ENCODE measurements at regions of chr9 and their contacts with region 1.

Region 1: GRCh38 chr9:38687387-38687842 is 32.5 kb downstream of the FAM240B start:
- DNase-seq: peak in 5 of 10 donors; percentile 18 to 89 (median 71)

Region 2: GRCh38 chr9:38629511-38629910 is 57.9 kb before region 1 on chr9:
- intact Hi-C with region 1: no loop called
- DNase-seq: no peak

Region 3: GRCh38 chr9:38732885-38733284 is 45.5 kb after region 1 on chr9:
- intact Hi-C with region 1: no loop called
- DNase-seq: no peak

Region 4: DNA sequence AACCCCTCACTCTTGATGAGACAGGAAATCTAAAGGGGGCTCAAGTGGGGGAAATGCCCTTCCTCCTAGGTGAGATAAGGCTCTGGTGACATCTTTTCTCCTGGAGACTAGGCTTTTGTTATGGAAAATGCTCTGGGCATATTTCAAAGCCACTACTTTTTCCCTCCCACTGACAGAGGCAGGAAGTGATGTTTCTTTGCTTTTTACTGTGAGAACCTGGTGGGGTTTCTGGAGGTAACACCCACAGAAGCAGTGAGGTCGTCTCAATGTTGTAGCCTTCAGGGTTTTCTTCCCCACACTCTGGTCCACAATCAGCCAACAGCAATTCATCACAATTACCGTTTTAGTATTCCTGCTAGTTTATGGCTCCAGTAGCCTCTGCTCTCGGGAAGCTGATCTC is 73.9 kb after region 1 on chr9:
- intact Hi-C with region 1: loop called (anchors 10 kb)
- DNase-seq: no peak